H1 (cell line): ENCODE measurements at regions of chr17 and their contacts with region 1.

Region 1: GRCh38 chr17:7687908-7688807 is at the start of gene WRAP53:
- DNase-seq: peak; percentile 95 to 99
- H3K4me3 ChIP-seq: peak within 1 kb of the TSS; percentile 75 to 100 (median 94)
- H3K27ac ChIP-seq: peak within 1 kb of the TSS; percentile 99
- H3K4me1 ChIP-seq: peaks cover 0 to 11% (median 4%) of the 10 kb centered on the region in 4 experiments; a peak in 4 of 7 replicates
- H3K27me3 ChIP-seq: no peaks in the 10 kb centered on the region
- CTCF ChIP-seq: peak; percentile 91 to 99 (median 93)
- EP300 ChIP-seq: no peak
- POLR2A ChIP-seq: peak in 1 of 2 experiments; percentile 77; a peak in 2 of 3 replicates
- RAD21 ChIP-seq: peak; percentile 83 to 85
- total RNA-seq, gene WRAP53: 29.3 and 30.1 TPM in 2 replicates

Region 2: GRCh38 chr17:7484067-7484918 is 203.9 kb before region 1 on chr17 and contains the start of gene POLR2A:
- CTCF ChIA-PET with region 1: no interaction called
- POLR2A ChIA-PET with region 1: interaction called, 16 read pairs
- DNase-seq: peak; percentile 93 to 98
- H3K4me3 ChIP-seq: peak within 1 kb of the TSS; percentile 79 to 92 (median 84)
- H3K27ac ChIP-seq: peak within 1 kb of the TSS; percentile 96
- H3K4me1 ChIP-seq: peaks cover 2 to 18% (median 13%) of the 10 kb centered on the region in 4 experiments
- H3K27me3 ChIP-seq: no peaks in the 10 kb centered on the region
- CTCF ChIP-seq: no peak
- EP300 ChIP-seq: peak in 1 of 2 experiments; percentile 95; a peak in 1 of 3 replicates
- POLR2A ChIP-seq: peak; percentile 100
- RAD21 ChIP-seq: no peak
- total RNA-seq, gene POLR2A: 150 and 157 TPM in 2 replicates

Region 3: GRCh38 chr17:7589204-7589868 is 98.8 kb before region 1 on chr17:
- CTCF ChIA-PET with region 1: interaction called, 22 read pairs
- POLR2A ChIA-PET with region 1: interaction called, 135 read pairs
- DNase-seq: peak in 1 of 2 experiments; percentile 91
- H3K4me3 ChIP-seq: peak overlapping the region; percentile 59 to 73 (median 69)
- H3K27ac ChIP-seq: no peak overlapping the region
- H3K4me1 ChIP-seq: peaks cover 6 to 23% (median 18%) of the 10 kb centered on the region in 4 experiments
- H3K27me3 ChIP-seq: no peaks in the 10 kb centered on the region
- CTCF ChIP-seq: peak; percentile 86 to 92 (median 91)
- EP300 ChIP-seq: no peak
- POLR2A ChIP-seq: peak in 1 of 2 experiments; percentile 59; a peak in 2 of 3 replicates
- RAD21 ChIP-seq: peak; percentile 66 to 83

Region 4: DNA sequence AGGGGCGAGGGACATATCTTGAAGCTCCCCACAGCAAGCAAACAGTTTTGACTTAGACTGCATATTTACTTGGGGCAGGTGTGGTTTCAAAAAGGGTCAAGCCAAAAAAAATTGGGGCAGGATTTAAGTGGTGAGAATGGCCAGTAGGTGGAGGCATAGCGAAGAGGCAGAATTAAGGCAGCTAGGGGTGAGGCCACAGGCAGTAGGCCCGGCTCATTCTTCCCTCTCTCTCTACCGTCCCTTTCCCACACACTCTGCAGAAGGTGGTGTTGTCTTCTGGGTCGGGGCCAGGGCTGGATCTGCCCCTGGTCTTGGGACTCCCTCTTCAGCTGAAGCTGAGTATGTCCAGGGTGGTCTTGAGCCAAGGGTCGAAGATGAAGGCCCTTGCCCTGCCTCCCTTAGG is 55.7 kb before region 1 on chr17:
- CTCF ChIA-PET with region 1: interaction called, 199 read pairs
- POLR2A ChIA-PET with region 1: interaction called, 2,272 read pairs
- DNase-seq: peak; percentile 39 to 66
- H3K4me3 ChIP-seq: no peak overlapping the region
- H3K27ac ChIP-seq: no peak overlapping the region
- H3K4me1 ChIP-seq: peaks cover 0 to 12% (median 3%) of the 10 kb centered on the region in 4 experiments; a peak in 3 of 7 replicates
- H3K27me3 ChIP-seq: no peaks in the 10 kb centered on the region
- CTCF ChIP-seq: peak; percentile 61 to 85 (median 79)
- EP300 ChIP-seq: no peak
- POLR2A ChIP-seq: no peak
- RAD21 ChIP-seq: peak; percentile 75 to 81

Region 5: DNA sequence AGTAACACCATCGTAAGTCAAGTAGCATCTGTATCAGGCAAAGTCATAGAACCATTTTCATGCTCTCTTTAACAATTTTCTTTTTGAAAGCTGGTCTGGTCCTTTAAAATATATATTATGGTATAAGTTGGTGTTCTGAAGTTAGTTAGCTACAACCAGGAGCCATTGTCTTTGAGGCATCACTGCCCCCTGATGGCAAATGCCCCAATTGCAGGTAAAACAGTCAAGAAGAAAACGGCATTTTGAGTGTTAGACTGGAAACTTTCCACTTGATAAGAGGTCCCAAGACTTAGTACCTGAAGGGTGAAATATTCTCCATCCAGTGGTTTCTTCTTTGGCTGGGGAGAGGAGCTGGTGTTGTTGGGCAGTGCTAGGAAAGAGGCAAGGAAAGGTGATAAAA is 14.9 kb before region 1 on chr17:
- CTCF ChIA-PET with region 1: interaction called, 127 read pairs
- POLR2A ChIA-PET with region 1: interaction called, 2,272 read pairs
- DNase-seq: peak in 1 of 2 experiments; percentile 89
- H3K4me3 ChIP-seq: no peak overlapping the region
- H3K27ac ChIP-seq: no peak overlapping the region
- H3K4me1 ChIP-seq: peaks cover 5 to 15% (median 10%) of the 10 kb centered on the region in 4 experiments
- H3K27me3 ChIP-seq: no peaks in the 10 kb centered on the region
- CTCF ChIP-seq: peak in 2 of 3 experiments; percentile 66 to 74; a peak in 3 of 4 replicates
- EP300 ChIP-seq: no peak
- POLR2A ChIP-seq: no peak
- RAD21 ChIP-seq: peak; percentile 79 to 85

Region 6: GRCh38 chr17:7745748-7746470 is 57.8 kb after region 1 on chr17:
- CTCF ChIA-PET with region 1: interaction called, 11 read pairs
- POLR2A ChIA-PET with region 1: interaction called, 4 read pairs
- DNase-seq: no peak
- H3K4me3 ChIP-seq: no peak overlapping the region
- H3K27ac ChIP-seq: no peak overlapping the region
- H3K4me1 ChIP-seq: no peaks in the 10 kb centered on the region
- H3K27me3 ChIP-seq: no peaks in the 10 kb centered on the region; a peak in 1 of 7 replicates
- CTCF ChIP-seq: no peak
- EP300 ChIP-seq: no peak
- POLR2A ChIP-seq: no peak
- RAD21 ChIP-seq: no peak

Region 7: DNA sequence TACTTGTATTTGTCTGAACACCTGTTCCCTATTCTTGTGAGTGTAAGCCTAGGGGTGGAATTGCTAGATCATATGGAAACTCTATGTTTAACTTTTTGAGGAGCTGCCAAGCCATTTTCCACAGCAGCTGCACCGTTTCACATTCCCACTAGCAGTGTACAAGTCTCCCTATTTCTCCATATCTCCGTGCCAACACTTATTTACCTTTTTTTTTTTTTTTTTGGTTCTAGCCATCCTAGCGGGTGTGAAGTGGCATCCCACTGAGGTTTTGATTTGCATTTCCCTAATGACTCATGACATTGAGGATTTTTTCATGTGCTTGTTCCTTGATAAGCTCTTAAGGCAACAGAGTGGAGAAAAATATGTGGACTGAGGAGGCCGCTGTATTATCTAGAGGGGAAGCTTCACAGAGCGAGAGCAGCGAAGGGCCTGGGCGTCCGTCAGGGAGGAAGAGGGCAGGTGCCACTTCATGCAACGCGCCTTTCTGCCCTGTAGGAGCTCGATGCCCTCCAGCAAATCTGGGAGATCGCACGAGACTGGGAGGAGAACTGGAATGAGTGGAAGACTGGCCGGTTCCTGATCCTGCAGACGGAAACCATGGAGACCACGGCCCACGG is 79.4 kb after region 1 on chr17:
- CTCF ChIA-PET with region 1: no interaction called
- POLR2A ChIA-PET with region 1: no interaction called
- DNase-seq: no peak
- H3K4me3 ChIP-seq: no peak overlapping the region
- H3K27ac ChIP-seq: no peak overlapping the region
- H3K4me1 ChIP-seq: no peaks in the 10 kb centered on the region; a peak in 1 of 7 replicates
- H3K27me3 ChIP-seq: no peaks in the 10 kb centered on the region
- CTCF ChIP-seq: no peak
- EP300 ChIP-seq: no peak
- POLR2A ChIP-seq: no peak
- RAD21 ChIP-seq: no peak

Region 8: GRCh38 chr17:7850701-7851437 is 162.7 kb after region 1 on chr17:
- CTCF ChIA-PET with region 1: no interaction called
- POLR2A ChIA-PET with region 1: no interaction called
- DNase-seq: no peak
- H3K4me3 ChIP-seq: peak overlapping the region; percentile 39 to 65 (median 52)
- H3K27ac ChIP-seq: no peak overlapping the region
- H3K4me1 ChIP-seq: peaks cover 0 to 29% (median 24%) of the 10 kb centered on the region in 4 experiments; a peak in 6 of 7 replicates
- H3K27me3 ChIP-seq: peaks cover 27 to 46% (median 41%) of the 10 kb centered on the region in 4 experiments
- CTCF ChIP-seq: no peak
- EP300 ChIP-seq: no peak
- POLR2A ChIP-seq: no peak
- RAD21 ChIP-seq: no peak